ENCODE measurements at regions of chr6 and their contacts with region 1.

Region 1: GRCh38 chr6:100479179-100480035 is 14.7 kb upstream of the SIM1 start:
- H3K4me3 Mint-ChIP-seq: no peak overlapping the region
- H3K27ac Mint-ChIP-seq: no peak overlapping the region
- H3K4me1 Mint-ChIP-seq: no peaks in the 10 kb centered on the region
- H3K27me3 Mint-ChIP-seq: peaks cover 27% of the 10 kb centered on the region

Region 2: DNA sequence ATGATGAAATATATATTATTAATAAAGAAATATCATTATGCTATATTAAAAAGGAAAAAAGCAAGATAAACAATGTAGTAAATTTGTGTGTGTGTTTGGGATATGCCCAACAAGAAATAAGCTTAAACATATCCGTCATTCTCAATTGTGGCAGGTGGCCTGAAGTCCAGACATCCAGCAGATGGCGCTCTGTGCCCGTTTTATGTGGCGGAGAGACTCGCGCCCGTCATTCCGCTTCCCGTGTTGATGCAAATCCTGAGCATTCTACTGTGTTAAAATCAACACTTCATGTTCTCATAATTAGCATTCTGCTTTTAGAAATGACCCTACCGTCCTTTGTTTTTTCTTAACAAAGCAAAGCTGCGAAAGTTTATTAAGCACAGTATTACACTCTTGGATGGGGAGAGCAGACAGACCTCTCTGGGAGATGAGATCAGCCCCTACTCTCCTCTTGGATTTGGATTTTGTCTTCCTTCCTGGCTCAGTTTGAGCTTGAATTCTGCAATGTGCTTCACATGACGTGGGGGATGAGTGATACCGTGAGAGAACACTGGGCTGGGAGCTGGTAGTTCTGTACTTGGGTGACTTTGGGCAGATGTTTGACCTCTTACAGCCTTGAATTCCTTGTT is 611.2 kb before region 1 on chr6:
- intact Hi-C with region 1: loop called (anchors 5 kb)
- H3K4me3 Mint-ChIP-seq: no peak overlapping the region
- H3K27ac Mint-ChIP-seq: no peak overlapping the region
- H3K4me1 Mint-ChIP-seq: no peaks in the 10 kb centered on the region
- H3K27me3 Mint-ChIP-seq: peaks cover 22% of the 10 kb centered on the region

Region 3: GRCh38 chr6:100001915-100002388 is 477.5 kb before region 1 on chr6:
- intact Hi-C with region 1: loop called (anchors 1 kb)
- H3K4me3 Mint-ChIP-seq: no peak overlapping the region
- H3K27ac Mint-ChIP-seq: no peak overlapping the region
- H3K4me1 Mint-ChIP-seq: no peaks in the 10 kb centered on the region
- H3K27me3 Mint-ChIP-seq: peaks cover 9% of the 10 kb centered on the region

Region 4: DNA sequence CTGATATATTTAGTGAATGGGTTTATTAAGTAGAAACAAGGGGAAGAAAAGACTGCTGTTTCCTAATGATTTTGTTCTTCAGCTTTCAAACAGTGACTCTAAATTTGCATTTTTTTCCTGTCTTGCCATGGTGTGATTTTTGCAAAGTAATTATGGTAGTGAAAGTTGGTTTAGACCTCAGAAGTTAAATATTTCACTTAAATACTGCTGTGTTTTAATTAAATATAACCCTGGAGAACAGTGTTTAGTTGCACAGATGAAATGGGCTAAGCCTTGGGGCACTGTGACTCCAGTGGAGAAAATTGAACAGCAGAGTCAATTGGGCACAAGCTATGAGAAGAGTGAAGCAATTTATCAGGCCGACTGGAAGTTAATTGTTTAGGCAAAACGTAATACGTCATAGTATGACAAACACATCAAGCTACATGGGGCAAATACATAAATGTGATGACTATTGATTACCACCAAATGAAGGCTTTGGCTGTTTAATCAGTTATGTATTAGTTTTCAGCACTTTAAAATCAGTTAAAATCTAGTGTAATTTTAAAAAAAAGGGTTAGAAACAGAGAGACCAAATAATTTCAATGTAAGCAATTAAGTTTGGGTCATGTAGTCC is 374.2 kb before region 1 on chr6:
- intact Hi-C with region 1: loop called (anchors 5 kb)
- H3K4me3 Mint-ChIP-seq: no peak overlapping the region
- H3K27ac Mint-ChIP-seq: no peak overlapping the region
- H3K4me1 Mint-ChIP-seq: no peaks in the 10 kb centered on the region
- H3K27me3 Mint-ChIP-seq: peaks cover 3% of the 10 kb centered on the region

Region 5: DNA sequence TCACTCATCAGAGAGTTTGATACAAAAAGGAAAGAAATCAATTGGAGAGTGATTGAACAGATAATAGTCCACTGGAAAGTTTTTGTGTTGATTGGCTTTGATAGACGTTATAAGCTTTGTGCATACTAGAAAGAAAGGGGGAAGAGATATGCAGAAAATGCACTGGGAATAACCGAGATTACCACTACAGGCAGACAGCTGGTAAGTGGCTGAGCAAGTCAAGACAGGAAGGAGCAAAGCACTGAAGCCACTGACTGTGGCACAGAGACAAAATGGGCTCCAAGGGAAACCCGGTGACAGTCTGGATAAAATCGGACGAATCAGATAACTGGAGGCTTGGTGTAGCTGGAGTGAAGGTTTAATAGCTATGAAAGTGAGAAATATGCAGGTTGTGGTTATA is 223.7 kb before region 1 on chr6:
- intact Hi-C with region 1: no loop called
- H3K4me3 Mint-ChIP-seq: no peak overlapping the region
- H3K27ac Mint-ChIP-seq: no peak overlapping the region
- H3K4me1 Mint-ChIP-seq: no peaks in the 10 kb centered on the region
- H3K27me3 Mint-ChIP-seq: no peaks in the 10 kb centered on the region

Region 6: DNA sequence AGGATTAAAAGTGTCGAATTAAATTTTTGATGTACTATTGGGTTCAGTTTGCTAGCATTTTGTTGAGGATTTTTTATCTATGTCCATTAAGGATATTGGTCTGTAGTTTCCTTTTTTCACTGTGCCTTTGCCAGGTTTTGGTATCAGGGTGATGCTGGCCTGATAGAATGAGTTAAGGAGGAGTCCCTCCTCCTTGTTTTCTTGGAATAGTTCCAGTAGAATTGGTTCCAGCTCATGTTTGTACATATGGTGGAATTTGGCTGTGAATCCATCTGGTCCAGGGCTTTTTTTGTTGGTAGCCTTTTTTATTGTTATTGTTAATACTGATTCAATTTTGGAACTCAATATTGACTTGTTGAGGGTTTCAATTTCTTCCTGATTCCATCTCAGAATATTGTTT is 156.5 kb before region 1 on chr6:
- intact Hi-C with region 1: no loop called
- H3K4me3 Mint-ChIP-seq: no peak overlapping the region
- H3K27ac Mint-ChIP-seq: no peak overlapping the region
- H3K4me1 Mint-ChIP-seq: no peaks in the 10 kb centered on the region
- H3K27me3 Mint-ChIP-seq: no peaks in the 10 kb centered on the region

Region 7: GRCh38 chr6:100426241-100426640 is 53.2 kb before region 1 on chr6:
- intact Hi-C with region 1: no loop called
- H3K4me3 Mint-ChIP-seq: no peak overlapping the region
- H3K27ac Mint-ChIP-seq: no peak overlapping the region
- H3K4me1 Mint-ChIP-seq: no peaks in the 10 kb centered on the region
- H3K27me3 Mint-ChIP-seq: no peaks in the 10 kb centered on the region

Measured in dendritic cell treated with granulocyte-macrophage colony-stimulating factor and Interleukin-4, amounts not matched to agents 40 ng/mL and 50 ng/mL, for 4 days (primary cell).